ENCODE measurements at regions of chr5 and their contacts with region 1.

Region 1: DNA sequence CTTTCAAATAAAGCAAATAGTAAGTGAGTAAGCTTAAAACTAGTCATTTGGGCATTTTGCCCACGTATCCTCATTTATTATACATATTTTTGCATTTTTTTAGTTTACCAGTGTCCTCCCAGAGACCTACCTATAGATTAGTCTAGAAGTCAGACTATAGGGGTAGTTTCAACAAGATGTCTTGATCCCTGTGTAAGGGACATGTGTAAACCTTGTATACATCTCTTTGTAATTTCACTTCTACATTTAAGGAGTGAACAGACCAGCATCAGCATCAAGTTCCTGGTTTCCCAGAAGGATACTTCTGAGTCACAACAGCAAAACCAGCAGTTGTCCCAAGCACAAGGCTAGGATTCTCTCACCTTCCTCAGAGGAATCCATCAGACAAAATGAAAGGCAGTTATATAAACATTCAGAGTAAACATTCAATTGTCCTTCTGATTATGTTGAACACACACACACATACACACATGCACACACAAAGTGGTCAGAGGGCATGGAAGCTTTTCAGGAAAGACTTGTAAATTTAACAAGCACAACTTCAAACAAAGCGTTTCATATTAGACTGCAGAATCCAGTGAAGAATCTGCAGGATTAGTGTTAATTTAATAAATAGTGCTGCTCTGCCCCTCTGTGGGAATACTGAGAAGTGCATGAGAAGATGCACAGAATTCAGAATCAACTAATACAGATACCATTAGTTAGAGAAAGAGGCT is 55.4 kb downstream of the HINT1 start:
- DNase-seq: no peak
- ATAC-seq: peak in 2 of 4 donors; percentile 58 to 68
- H3K4me3 ChIP-seq: no peak overlapping the region
- H3K27ac ChIP-seq: no peak overlapping the region
- H3K4me1 ChIP-seq: peaks cover 0 to 5% (median 0%) of the 10 kb centered on the region in 12 donors
- H3K27me3 ChIP-seq: no peaks in the 10 kb centered on the region
- CTCF ChIP-seq: peak; percentile 44 to 81 (median 68)
- POLR2A ChIP-seq: no peak

Region 2: DNA sequence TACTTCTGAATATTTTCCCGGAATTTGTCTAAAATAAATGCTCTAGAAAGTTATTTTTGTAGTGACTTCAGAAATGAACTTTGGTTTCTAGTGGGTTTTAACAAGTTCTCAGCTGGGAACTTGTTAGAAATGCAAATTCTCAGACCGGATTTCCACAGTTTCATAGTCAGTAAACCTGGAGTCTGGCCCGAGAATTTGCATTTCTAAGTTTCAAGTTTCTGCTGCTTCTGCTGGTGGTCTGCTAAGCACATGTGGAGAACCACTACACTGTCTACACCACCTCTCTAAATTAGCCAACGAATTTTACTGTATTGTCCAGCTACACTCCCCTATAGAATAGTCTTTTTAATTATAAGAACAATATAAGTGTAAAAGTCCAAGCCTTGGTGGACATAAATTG is 997.5 kb before region 1 on chr5:
- intact Hi-C with region 1: loop called in 1 of 10 experiments (anchors 10 kb)
- DNase-seq: no peak
- ATAC-seq: no peak
- H3K4me3 ChIP-seq: no peak overlapping the region
- H3K27ac ChIP-seq: no peak overlapping the region
- H3K4me1 ChIP-seq: peaks cover 0 to 8% (median 0%) of the 10 kb centered on the region in 12 donors
- H3K27me3 ChIP-seq: no peaks in the 10 kb centered on the region
- CTCF ChIP-seq: no peak
- POLR2A ChIP-seq: no peak

Region 3: DNA sequence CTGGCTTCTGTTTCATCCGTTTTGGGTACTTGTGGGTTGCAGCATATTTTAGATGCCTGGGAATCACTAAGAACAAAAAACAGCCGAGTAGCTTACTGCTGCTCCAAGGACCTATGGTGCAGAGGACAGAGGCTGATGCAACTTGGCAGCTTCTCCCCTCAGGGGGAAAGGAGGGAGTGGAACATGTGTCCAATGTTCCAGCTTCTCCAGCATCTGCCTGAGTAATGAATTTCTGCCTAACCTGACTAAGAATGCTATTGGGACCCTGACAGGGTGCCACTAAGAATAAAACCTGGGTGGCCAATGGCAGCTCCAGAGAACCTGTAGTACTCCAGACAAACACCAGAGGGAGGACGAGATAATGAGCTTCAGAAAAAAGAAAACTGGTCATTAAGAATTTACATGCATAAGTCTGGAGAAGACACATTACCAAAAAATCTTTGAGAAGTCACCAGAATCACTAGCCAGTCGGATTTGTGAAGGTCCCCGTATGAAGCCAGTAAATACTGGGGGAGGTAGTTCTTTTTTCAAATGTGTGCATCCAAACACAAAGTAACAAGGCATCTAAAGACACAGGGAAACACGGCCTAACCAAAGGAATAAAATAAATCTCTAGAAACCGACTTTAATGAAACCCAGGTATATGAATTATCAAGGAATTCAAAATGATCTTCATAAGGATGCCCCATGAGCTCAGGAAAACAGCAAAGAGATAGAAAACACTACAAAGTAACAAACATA is 238.2 kb before region 1 on chr5:
- intact Hi-C with region 1: loop called in 3 of 10 experiments (anchors 10 kb)
- DNase-seq: peak in 3 of 5 donors; percentile 18 to 49 (median 48)
- ATAC-seq: peak in 3 of 4 donors; percentile 50 to 92 (median 82)
- H3K4me3 ChIP-seq: no peak overlapping the region
- H3K27ac ChIP-seq: peak overlapping the region in 1 of 12 donors; percentile 24
- H3K4me1 ChIP-seq: peaks cover 0 to 13% (median 0%) of the 10 kb centered on the region in 12 donors
- H3K27me3 ChIP-seq: no peaks in the 10 kb centered on the region
- CTCF ChIP-seq: peak in 11 of 12 donors; percentile 21 to 58 (median 45)
- POLR2A ChIP-seq: no peak

Region 4: GRCh38 chr5:131165119-131165727 is 55.5 kb after region 1 on chr5 and contains the start of gene HINT1:
- intact Hi-C with region 1: no loop called
- DNase-seq: peak; percentile 92 to 97 (median 93)
- ATAC-seq: peak; percentile 92 to 98 (median 96)
- H3K4me3 ChIP-seq: peak within 1 kb of the TSS; percentile 72 to 97 (median 88)
- H3K27ac ChIP-seq: peak within 1 kb of the TSS; percentile 83 to 98 (median 94)
- H3K4me1 ChIP-seq: peaks cover 0 to 29% (median 16%) of the 10 kb centered on the region in 12 donors
- H3K27me3 ChIP-seq: no peaks in the 10 kb centered on the region
- CTCF ChIP-seq: peak in 3 of 12 donors; percentile 23 to 45 (median 37)
- POLR2A ChIP-seq: peak in 1 of 2 donors; percentile 56
- total RNA-seq, gene HINT1: 76.8 to 165 (median 148) TPM

Measured in heart left ventricle (tissue), 16 donors.